ENCODE measurements at regions of chr1 and their contacts with region 1.

Region 1: DNA sequence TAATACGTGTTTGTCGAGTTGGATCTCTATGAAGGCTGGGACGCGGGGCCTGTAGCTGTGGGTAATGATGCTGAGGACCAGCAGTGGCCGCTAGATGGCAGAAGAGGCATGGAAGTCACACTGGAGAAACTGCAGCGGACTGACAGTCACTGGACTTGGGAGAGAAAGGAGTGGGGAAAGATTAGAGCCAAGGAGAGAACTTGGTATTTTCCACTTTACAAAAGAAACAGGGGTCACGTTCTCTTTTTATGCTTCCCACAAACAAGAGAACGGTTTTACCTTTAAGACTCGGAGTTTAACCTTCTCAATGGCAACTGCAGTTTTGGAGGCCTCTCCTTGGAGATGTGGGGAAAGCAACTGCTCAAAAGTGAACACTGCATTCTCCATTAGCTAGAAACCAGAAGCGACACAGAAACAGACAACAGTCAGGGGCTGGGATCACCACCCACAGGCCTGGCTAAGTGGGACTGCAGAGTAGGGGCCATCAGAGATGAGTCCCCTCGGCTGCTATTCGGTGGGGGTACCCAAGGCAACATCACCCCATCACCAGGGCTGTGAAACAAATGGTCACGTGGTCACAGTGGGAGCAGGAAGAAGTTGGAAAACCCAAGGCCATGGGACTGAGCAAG is 51.1 kb upstream of the EDEM3 start:
- DNase-seq: peak; percentile 83
- H3K4me3 ChIP-seq: no peak overlapping the region
- H3K27ac ChIP-seq: no peak overlapping the region
- H3K4me1 ChIP-seq: peaks cover 4% of the 10 kb centered on the region
- H3K27me3 ChIP-seq: no peaks in the 10 kb centered on the region
- CTCF ChIP-seq: peak; percentile 91 to 93
- POLR2A ChIP-seq: no peak

Region 2: DNA sequence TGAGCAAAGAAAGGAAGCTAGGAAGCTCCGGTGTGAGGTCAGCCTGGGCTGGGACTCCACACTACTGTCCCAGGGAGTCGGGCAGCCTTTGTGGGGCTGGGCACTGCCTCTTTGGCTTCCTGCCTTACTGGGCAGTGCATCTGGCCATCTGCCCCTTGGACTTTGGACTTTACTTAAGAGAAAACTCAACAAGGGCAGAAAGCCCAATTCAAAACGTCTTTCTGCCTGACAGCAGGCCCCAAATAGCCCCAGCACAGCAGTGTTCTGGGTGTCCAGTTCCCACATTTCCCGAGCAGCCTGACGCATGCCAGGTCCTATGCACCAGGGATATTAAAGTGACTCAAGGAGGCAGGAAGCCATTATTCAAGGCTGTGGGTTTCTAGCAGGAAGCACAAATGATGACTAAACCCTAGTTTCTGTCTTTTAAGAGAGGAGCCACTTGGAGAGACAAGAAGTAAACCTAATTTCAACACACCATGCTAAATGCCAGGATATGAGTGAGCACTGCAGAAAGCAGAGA is 13.3 kb before region 1 on chr1:
- CTCF ChIA-PET with region 1: interaction called, 11 read pairs
- POLR2A ChIA-PET with region 1: interaction called, 3 read pairs
- dilution Hi-C with region 1: no loop called
- intact Hi-C with region 1: no loop called
- DNase-seq: peak; percentile 90
- H3K4me3 ChIP-seq: no peak overlapping the region
- H3K27ac ChIP-seq: peak overlapping the region; percentile 96
- H3K4me1 ChIP-seq: peaks cover 22% of the 10 kb centered on the region
- H3K27me3 ChIP-seq: no peaks in the 10 kb centered on the region
- CTCF ChIP-seq: no peak
- POLR2A ChIP-seq: no peak

Region 3: GRCh38 chr1:184954231-184954995 is 148.6 kb after region 1 on chr1:
- CTCF ChIA-PET with region 1: interaction called, 10 read pairs
- POLR2A ChIA-PET with region 1: no interaction called
- dilution Hi-C with region 1: no loop called
- intact Hi-C with region 1: no loop called
- DNase-seq: no peak
- H3K4me3 ChIP-seq: no peak overlapping the region
- H3K27ac ChIP-seq: no peak overlapping the region
- H3K4me1 ChIP-seq: peaks cover 12% of the 10 kb centered on the region
- H3K27me3 ChIP-seq: no peaks in the 10 kb centered on the region
- CTCF ChIP-seq: no peak
- POLR2A ChIP-seq: no peak

Region 4: GRCh38 chr1:184982002-184982954 is 176.5 kb after region 1 on chr1:
- CTCF ChIA-PET with region 1: interaction called, 139 read pairs
- POLR2A ChIA-PET with region 1: no interaction called
- dilution Hi-C with region 1: no loop called
- intact Hi-C with region 1: loop called (anchors 1 kb)
- DNase-seq: peak; percentile 64
- H3K4me3 ChIP-seq: no peak overlapping the region
- H3K27ac ChIP-seq: no peak overlapping the region
- H3K4me1 ChIP-seq: no peaks in the 10 kb centered on the region
- H3K27me3 ChIP-seq: peaks cover 6 to 12% of the 10 kb centered on the region in 2 experiments
- CTCF ChIP-seq: peak; percentile 81 to 88
- POLR2A ChIP-seq: no peak

Region 5: GRCh38 chr1:185200889-185201288 is 395.1 kb after region 1 on chr1:
- CTCF ChIA-PET with region 1: no interaction called
- POLR2A ChIA-PET with region 1: no interaction called
- dilution Hi-C with region 1: no loop called
- intact Hi-C with region 1: no loop called
- DNase-seq: no peak
- H3K4me3 ChIP-seq: no peak overlapping the region
- H3K27ac ChIP-seq: no peak overlapping the region
- H3K4me1 ChIP-seq: no peaks in the 10 kb centered on the region
- H3K27me3 ChIP-seq: no peaks in the 10 kb centered on the region
- CTCF ChIP-seq: no peak
- POLR2A ChIP-seq: no peak

Region 6: DNA sequence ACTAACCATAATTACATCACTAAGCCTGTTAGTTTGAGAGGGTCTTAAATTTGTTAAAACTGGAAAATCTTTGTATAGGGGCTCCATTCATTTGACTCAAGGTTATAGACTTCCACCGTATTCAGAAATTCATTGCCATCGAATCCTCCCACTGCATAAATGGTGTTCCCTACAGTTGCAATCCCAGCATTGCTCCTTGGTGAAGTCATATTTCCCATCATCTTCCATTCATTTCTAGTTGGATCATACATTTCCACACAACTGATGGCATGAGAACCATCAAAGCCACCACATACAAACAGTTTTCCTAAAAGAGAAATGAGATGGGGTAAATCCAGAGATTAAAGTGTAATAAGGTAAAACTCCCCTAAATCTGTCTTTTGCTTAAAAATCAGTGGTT is 492.2 kb after region 1 on chr1:
- CTCF ChIA-PET with region 1: no interaction called
- POLR2A ChIA-PET with region 1: no interaction called
- dilution Hi-C with region 1: no loop called
- intact Hi-C with region 1: loop called (anchors 5 kb)
- DNase-seq: no peak
- H3K4me3 ChIP-seq: no peak overlapping the region
- H3K27ac ChIP-seq: no peak overlapping the region
- H3K4me1 ChIP-seq: no peaks in the 10 kb centered on the region
- H3K27me3 ChIP-seq: no peaks in the 10 kb centered on the region
- CTCF ChIP-seq: no peak
- POLR2A ChIP-seq: no peak

Region 7: GRCh38 chr1:186212544-186213226 is 1406.9 kb after region 1 on chr1:
- CTCF ChIA-PET with region 1: no interaction called
- POLR2A ChIA-PET with region 1: no interaction called
- dilution Hi-C with region 1: no loop called
- intact Hi-C with region 1: loop called (anchors 1 kb)
- DNase-seq: peak; percentile 88
- H3K4me3 ChIP-seq: no peak overlapping the region
- H3K27ac ChIP-seq: no peak overlapping the region
- H3K4me1 ChIP-seq: peaks cover 4% of the 10 kb centered on the region
- H3K27me3 ChIP-seq: no peaks in the 10 kb centered on the region
- CTCF ChIP-seq: peak; percentile 73 to 77
- POLR2A ChIP-seq: no peak